Natural killer cell (primary cell): ENCODE measurements at regions of chr9 and their contacts with region 1.

Region 1: GRCh38 chr9:124771021-124771866 is at the start of gene NR6A1:
- DNase-seq: peak; percentile 94 to 96
- ATAC-seq: peak; percentile 90 to 96 (median 90)
- H3K4me3 ChIP-seq: peak within 1 kb of the TSS; percentile 57
- H3K4me3 Mint-ChIP-seq: peak within 1 kb of the TSS; percentile 91
- H3K27ac ChIP-seq: peak within 1 kb of the TSS; percentile 68
- H3K27ac Mint-ChIP-seq: peak within 1 kb of the TSS; percentile 88 to 89
- H3K4me1 ChIP-seq: peaks cover 22% of the 10 kb centered on the region
- H3K4me1 Mint-ChIP-seq: peaks cover 41 to 42% of the 10 kb centered on the region in 2 donors
- H3K27me3 ChIP-seq: peaks cover 44% of the 10 kb centered on the region
- H3K27me3 Mint-ChIP-seq: peaks cover 51 to 55% of the 10 kb centered on the region in 2 donors
- CTCF ChIP-seq: no peak
- total RNA-seq, gene NR6A1: 0.07 to 0.75 (median 0.49) TPM

Region 2: GRCh38 chr9:124593200-124593599 is 178.0 kb before region 1 on chr9:
- intact Hi-C with region 1: no loop called
- DNase-seq: no peak
- ATAC-seq: no peak
- H3K4me3 ChIP-seq: no peak overlapping the region
- H3K4me3 Mint-ChIP-seq: no peak overlapping the region
- H3K27ac ChIP-seq: no peak overlapping the region
- H3K27ac Mint-ChIP-seq: no peak overlapping the region
- H3K4me1 ChIP-seq: no peaks in the 10 kb centered on the region
- H3K4me1 Mint-ChIP-seq: no peaks in the 10 kb centered on the region
- H3K27me3 ChIP-seq: peaks cover 3% of the 10 kb centered on the region
- H3K27me3 Mint-ChIP-seq: peaks cover 5 to 42% of the 10 kb centered on the region in 2 donors
- CTCF ChIP-seq: no peak

Region 3: GRCh38 chr9:124754289-124754688 is 17.0 kb before region 1 on chr9:
- intact Hi-C with region 1: no loop called
- DNase-seq: no peak
- ATAC-seq: no peak
- H3K4me3 ChIP-seq: no peak overlapping the region
- H3K4me3 Mint-ChIP-seq: no peak overlapping the region
- H3K27ac ChIP-seq: no peak overlapping the region
- H3K27ac Mint-ChIP-seq: no peak overlapping the region
- H3K4me1 ChIP-seq: no peaks in the 10 kb centered on the region
- H3K4me1 Mint-ChIP-seq: no peaks in the 10 kb centered on the region
- H3K27me3 ChIP-seq: peaks cover 18% of the 10 kb centered on the region
- H3K27me3 Mint-ChIP-seq: peaks cover 49 to 80% of the 10 kb centered on the region in 2 donors
- CTCF ChIP-seq: peak; percentile 13

Region 4: DNA sequence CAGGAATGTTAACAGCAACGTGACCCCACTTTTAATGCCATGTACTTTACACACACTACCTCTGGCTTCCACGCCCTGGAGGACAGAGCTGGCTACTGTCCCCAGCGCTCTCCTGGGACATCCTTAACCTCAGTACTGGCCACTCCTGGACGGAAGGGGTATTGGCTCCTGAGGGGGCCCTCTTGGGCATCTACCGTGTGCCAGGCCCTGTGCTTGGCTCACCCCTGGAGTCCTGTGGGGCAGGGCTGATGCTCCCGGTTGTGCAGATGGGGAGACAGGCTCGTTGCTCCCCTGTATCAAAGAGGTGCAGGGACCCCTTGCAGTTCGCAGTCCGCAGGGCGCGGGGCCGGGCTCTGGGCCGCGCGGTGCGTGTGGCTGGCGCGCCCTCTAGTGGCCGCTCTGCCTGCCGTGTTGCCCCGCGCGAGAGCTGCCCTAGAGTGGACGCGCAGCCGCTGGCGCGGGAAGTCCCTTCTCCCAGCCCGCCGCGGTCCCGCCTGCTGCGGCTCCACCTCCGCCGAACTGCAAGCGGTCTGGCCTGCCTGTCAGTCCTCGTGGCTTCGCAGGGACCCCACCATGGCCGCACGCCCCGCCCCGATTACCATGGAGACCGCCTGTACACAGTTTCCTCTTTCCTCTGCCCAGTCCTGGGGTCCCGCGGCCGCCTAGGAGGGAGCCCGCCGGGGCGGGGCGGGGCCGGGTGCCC is 81.7 kb after region 1 on chr9 and contains the start of gene WDR38:
- intact Hi-C with region 1: loop called (anchors 1 kb)
- DNase-seq: peak; percentile 88 to 93
- ATAC-seq: peak; percentile 90 to 96 (median 95)
- H3K4me3 ChIP-seq: peak within 1 kb of the TSS; percentile 27
- H3K4me3 Mint-ChIP-seq: peak within 1 kb of the TSS; percentile 82
- H3K27ac ChIP-seq: peak within 1 kb of the TSS; percentile 87
- H3K27ac Mint-ChIP-seq: peak within 1 kb of the TSS; percentile 86 to 89
- H3K4me1 ChIP-seq: peaks cover 23% of the 10 kb centered on the region
- H3K4me1 Mint-ChIP-seq: peaks cover 13 to 24% of the 10 kb centered on the region in 2 donors
- H3K27me3 ChIP-seq: peaks cover 3% of the 10 kb centered on the region
- H3K27me3 Mint-ChIP-seq: no peaks in the 10 kb centered on the region
- CTCF ChIP-seq: peak; percentile 99
- total RNA-seq, gene WDR38: not detected

Region 5: DNA sequence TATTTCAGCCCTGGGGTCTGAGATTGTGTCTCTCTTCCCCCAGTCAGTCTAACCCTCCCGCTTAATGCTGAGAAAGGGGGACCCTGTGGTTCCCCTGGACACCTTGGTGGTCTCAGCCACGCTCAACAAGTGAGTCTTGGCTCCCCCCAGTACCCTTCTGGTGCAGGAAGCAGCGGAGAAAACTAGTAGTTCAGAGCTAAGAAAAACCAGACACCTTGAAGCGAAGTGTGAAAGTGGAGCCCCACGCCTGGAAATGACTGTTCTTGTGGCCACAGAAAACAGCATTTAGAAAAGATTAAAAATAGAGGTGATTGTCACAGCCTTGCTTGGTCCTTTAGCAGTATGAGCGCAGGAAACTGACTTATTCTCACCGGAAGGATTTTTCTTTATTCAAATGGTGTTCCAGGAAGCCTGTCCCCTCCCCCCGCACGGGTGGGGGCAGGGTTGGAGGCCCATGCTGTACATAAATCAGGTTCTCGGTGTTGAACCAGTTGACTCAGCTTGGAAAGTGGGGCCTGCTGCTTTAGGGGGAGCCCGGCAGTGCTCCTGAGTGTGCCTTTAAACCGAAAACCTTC is 98.8 kb after region 1 on chr9:
- intact Hi-C with region 1: loop called (anchors 5 kb)
- DNase-seq: peak; percentile 84 to 90
- ATAC-seq: peak; percentile 70 to 84 (median 70)
- H3K4me3 ChIP-seq: peak overlapping the region; percentile 96
- H3K4me3 Mint-ChIP-seq: peak overlapping the region; percentile 97
- H3K27ac ChIP-seq: peak overlapping the region; percentile 96
- H3K27ac Mint-ChIP-seq: peak overlapping the region; percentile 97
- H3K4me1 ChIP-seq: peaks cover 65% of the 10 kb centered on the region
- H3K4me1 Mint-ChIP-seq: peaks cover 60% of the 10 kb centered on the region in 2 donors
- H3K27me3 ChIP-seq: no peaks in the 10 kb centered on the region
- H3K27me3 Mint-ChIP-seq: no peaks in the 10 kb centered on the region
- CTCF ChIP-seq: no peak

Region 6: DNA sequence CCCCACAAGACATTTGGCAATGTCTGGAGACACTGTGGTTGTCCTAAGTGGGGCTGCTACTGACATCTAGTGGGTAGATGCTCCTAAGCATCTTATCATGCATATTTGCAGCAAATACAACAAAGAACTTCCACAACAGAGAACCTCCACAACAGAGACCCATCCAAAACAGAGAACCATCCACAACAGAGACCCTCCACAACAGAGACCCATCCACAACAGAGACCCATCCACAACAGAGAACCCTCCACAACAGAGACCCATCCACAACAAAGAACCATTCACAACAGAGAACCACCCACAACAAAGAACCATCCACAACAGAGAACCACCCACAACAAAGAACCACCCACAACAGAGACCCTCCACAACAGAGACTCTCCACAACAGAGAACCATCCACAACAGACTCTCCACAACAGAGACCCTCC is 123.5 kb after region 1 on chr9:
- intact Hi-C with region 1: loop called (anchors 1 kb)
- DNase-seq: peak in 1 of 2 donors; percentile 78
- ATAC-seq: peak; percentile 82 to 99 (median 96)
- H3K4me3 ChIP-seq: no peak overlapping the region
- H3K4me3 Mint-ChIP-seq: no peak overlapping the region
- H3K27ac ChIP-seq: no peak overlapping the region
- H3K27ac Mint-ChIP-seq: peak overlapping the region in 1 of 2 donors; percentile 74
- H3K4me1 ChIP-seq: peaks cover 4% of the 10 kb centered on the region
- H3K4me1 Mint-ChIP-seq: peaks cover 8 to 16% of the 10 kb centered on the region in 2 donors
- H3K27me3 ChIP-seq: no peaks in the 10 kb centered on the region
- H3K27me3 Mint-ChIP-seq: no peaks in the 10 kb centered on the region
- CTCF ChIP-seq: peak; percentile 65

Region 7: GRCh38 chr9:124940693-124941453 is 169.6 kb after region 1 on chr9 and contains the start of gene GOLGA1:
- intact Hi-C with region 1: loop called (anchors 1 kb)
- DNase-seq: peak; percentile 92 to 97
- ATAC-seq: peak; percentile 85 to 97 (median 88)
- H3K4me3 ChIP-seq: peak within 1 kb of the TSS; percentile 98
- H3K4me3 Mint-ChIP-seq: peak within 1 kb of the TSS; percentile 97
- H3K27ac ChIP-seq: peak within 1 kb of the TSS; percentile 98
- H3K27ac Mint-ChIP-seq: peak within 1 kb of the TSS; percentile 91 to 95
- H3K4me1 ChIP-seq: peaks cover 14% of the 10 kb centered on the region
- H3K4me1 Mint-ChIP-seq: peaks cover 22 to 24% of the 10 kb centered on the region in 2 donors
- H3K27me3 ChIP-seq: no peaks in the 10 kb centered on the region
- H3K27me3 Mint-ChIP-seq: no peaks in the 10 kb centered on the region
- CTCF ChIP-seq: no peak
- total RNA-seq, gene GOLGA1: 21.5 to 32.4 (median 27.0) TPM

Region 8: DNA sequence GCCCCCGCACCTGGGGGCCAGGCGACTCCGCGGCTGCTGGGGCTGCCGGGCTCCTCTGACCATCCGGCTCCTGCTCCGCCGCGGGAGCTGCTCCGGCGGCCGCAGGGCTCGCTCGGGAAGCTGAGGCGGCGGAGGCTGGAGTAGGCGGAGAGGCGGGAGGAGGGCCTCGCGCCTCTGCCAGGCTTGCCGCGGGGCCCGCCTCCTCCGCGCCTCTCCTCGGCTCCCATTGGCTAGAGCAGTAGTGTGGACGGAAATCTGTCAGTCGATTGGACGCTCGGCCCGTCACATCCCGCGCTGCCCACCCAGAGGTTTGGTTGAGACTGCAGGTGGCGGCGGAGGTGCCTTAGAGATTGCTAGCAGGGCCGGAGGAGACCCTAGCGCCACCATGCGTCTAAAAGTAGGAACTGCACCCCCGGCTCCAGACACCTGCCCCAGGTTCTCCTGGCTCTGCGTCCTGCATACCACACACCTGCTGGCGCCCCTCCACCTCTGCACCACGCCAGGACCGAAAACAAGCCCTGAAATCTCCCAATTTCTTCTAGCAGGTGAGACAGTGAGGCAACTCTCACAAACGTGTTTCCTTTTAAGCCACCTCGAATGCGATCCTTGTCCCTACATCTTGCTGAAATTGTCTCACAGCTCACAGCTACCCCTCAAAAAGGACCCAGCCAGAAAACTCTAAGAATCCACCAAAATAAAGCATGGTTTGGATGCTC is 372.3 kb after region 1 on chr9 and contains the start of gene SCAI:
- intact Hi-C with region 1: loop called (anchors 1 kb)
- DNase-seq: peak; percentile 95 to 99
- ATAC-seq: peak; percentile 98 to 100 (median 99)
- H3K4me3 ChIP-seq: peak within 1 kb of the TSS; percentile 33
- H3K4me3 Mint-ChIP-seq: peak within 1 kb of the TSS; percentile 98
- H3K27ac ChIP-seq: no peak within 1 kb of the TSS
- H3K27ac Mint-ChIP-seq: peak within 1 kb of the TSS; percentile 82 to 91
- H3K4me1 ChIP-seq: peaks cover 9% of the 10 kb centered on the region
- H3K4me1 Mint-ChIP-seq: peaks cover 21 to 23% of the 10 kb centered on the region in 2 donors
- H3K27me3 ChIP-seq: no peaks in the 10 kb centered on the region
- H3K27me3 Mint-ChIP-seq: no peaks in the 10 kb centered on the region
- CTCF ChIP-seq: peak; percentile 99
- total RNA-seq, gene SCAI: 8.5 to 13.0 (median 10.7) TPM

Region 9: DNA sequence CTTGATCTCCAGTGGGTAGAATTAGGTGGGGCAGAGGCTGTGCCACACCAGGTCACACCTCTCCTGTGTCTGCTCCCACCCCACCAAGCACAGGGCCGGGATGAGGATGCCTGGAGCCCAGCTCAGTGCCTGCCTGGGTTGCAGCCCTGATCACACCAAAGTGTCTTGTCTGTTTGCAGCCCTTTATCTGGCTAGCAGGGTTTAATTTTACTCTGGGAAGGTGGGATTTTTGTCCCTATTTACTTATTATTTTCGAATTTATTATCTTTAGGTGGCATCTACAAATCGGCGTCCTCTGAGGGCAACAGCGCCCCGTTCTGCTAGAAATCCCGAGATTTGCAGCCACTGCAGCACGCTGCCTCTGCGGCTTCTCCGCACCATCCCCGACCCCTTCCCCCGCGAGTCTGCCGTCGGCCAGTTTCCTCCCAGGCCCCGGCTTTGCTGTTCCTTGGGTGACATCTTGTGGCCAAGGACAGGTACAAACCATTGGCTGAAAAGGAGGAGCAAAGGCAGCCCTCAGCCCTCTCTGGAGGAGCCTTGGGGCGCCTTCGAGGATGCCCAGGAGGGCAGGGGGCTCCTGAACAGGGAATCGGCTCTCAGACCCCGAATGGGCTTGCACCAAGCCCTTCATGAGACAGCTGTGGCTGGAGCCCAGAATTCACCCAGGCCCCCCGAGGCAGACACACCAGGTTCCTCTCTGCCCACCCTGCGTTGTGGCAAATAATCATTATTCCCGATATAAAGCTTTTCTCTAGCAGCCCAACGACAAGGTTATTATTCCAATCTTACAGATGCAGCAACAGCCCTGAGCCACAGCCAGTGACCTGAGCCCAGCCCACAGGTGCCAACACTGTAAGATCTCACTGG is 603.4 kb after region 1 on chr9:
- intact Hi-C with region 1: loop called (anchors 2 kb)
- DNase-seq: peak; percentile 41 to 80
- ATAC-seq: peak; percentile 80 to 96 (median 95)
- H3K4me3 ChIP-seq: no peak overlapping the region
- H3K4me3 Mint-ChIP-seq: peak overlapping the region; percentile 28
- H3K27ac ChIP-seq: no peak overlapping the region
- H3K27ac Mint-ChIP-seq: peak overlapping the region in 1 of 2 donors; percentile 16
- H3K4me1 ChIP-seq: peaks cover 10% of the 10 kb centered on the region
- H3K4me1 Mint-ChIP-seq: peaks cover 0 to 9% of the 10 kb centered on the region in 2 donors
- H3K27me3 ChIP-seq: no peaks in the 10 kb centered on the region
- H3K27me3 Mint-ChIP-seq: no peaks in the 10 kb centered on the region
- CTCF ChIP-seq: peak; percentile 43